Endothelial cell of umbilical vein (primary cell): ENCODE measurements at regions of chr4 and their contacts with region 1.

Region 1: DNA sequence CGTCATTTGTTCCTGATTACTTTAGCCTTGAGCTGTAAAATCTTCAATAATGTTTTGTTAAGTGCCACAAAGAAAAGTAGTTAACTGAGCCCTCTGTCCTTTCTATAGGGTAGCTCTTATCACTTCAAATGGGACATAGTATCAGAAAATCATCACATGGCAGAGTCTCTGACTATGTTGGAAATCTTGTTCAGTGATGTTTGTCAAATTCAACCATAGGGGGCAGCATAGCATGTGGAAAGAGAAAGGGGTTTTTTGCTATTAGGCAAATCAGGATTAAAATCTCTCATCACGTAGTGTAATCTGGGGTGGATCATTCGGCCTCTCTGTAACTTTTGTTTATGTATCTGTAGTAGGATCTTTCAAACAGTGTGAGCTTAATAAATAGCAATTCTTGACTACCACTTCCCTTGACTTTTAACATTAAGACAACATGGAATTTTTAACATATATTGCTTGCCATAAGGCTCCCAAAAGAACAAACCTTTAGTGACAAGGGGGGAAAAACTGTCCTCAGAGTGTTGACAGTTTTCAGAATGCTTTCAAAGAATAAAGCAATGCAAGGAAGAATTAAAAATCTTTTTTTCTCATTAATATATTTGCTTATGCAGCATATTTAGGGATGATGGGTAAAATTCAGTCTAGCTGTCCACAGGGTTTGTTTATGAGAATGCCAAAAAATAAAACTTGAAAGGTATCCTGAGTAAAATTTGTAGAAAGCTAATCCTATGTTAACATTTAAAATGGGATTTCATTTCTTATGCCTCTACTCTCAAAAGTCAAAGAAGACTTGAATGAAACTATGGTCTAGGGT is 127.2 kb downstream of the FBXW7 start:
- DNase-seq: peak; percentile 42
- H3K4me3 ChIP-seq: no peak overlapping the region
- H3K27ac ChIP-seq: no peak overlapping the region
- H3K4me1 ChIP-seq: no peaks in the 10 kb centered on the region
- H3K27me3 ChIP-seq: no peaks in the 10 kb centered on the region
- CTCF ChIP-seq: peak; percentile 43 to 50
- POLR2A ChIP-seq: no peak

Region 2: DNA sequence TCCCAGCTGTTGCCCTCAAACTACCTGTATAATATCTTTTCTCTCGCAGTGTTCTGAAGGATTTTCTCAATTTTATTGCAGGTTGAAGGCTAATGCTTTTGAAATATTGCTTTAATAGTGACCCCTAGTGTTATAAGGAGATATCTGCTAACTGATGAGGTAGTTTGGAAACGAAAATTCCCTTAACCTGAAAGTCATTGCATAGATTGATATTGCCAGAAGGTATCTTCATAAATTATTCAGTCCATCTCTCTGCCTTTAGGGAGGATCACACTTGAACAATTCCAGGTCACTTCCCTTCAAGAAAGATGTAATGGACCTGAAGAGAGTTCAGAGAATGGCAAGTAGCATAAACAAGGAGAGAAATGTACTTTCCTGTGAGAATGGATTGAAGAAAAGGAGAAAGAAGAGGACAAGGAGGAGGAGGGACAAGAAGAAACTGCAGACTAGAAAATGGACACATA is 326.7 kb after region 1 on chr4:
- CTCF ChIA-PET with region 1: interaction called, 6 read pairs
- POLR2A ChIA-PET with region 1: no interaction called
- dilution Hi-C with region 1: no loop called
- intact Hi-C with region 1: loop called (anchors 1 kb)
- DNase-seq: peak; percentile 41
- H3K4me3 ChIP-seq: no peak overlapping the region
- H3K27ac ChIP-seq: no peak overlapping the region
- H3K4me1 ChIP-seq: no peaks in the 10 kb centered on the region
- H3K27me3 ChIP-seq: peaks cover 4 to 5% of the 10 kb centered on the region in 2 experiments
- CTCF ChIP-seq: peak; percentile 30 to 36
- POLR2A ChIP-seq: no peak

Region 3: GRCh38 chr4:152983774-152984411 is 575.2 kb after region 1 on chr4:
- CTCF ChIA-PET with region 1: no interaction called
- POLR2A ChIA-PET with region 1: no interaction called
- dilution Hi-C with region 1: no loop called
- intact Hi-C with region 1: no loop called
- DNase-seq: no peak
- H3K4me3 ChIP-seq: no peak overlapping the region
- H3K27ac ChIP-seq: no peak overlapping the region
- H3K4me1 ChIP-seq: no peaks in the 10 kb centered on the region
- H3K27me3 ChIP-seq: peaks cover 0 to 2% of the 10 kb centered on the region in 2 experiments
- CTCF ChIP-seq: no peak
- POLR2A ChIP-seq: no peak